ENCODE measurements at regions of chr10 and their contacts with region 1.

Region 1: GRCh38 chr10:11178606-11179515 is 161.2 kb downstream of the CELF2 start:
- DNase-seq: peak; percentile 49 to 93 (median 80)
- ATAC-seq: peak; percentile 90
- H3K4me3 ChIP-seq: peak overlapping the region; percentile 50
- H3K4me3 Mint-ChIP-seq: peak overlapping the region in 4 of 10 donors; percentile 66 to 83 (median 82)
- H3K27ac ChIP-seq: peak overlapping the region; percentile 95
- H3K27ac Mint-ChIP-seq: peak overlapping the region in 6 of 9 donors; percentile 92 to 98 (median 95)
- H3K4me1 ChIP-seq: peaks cover 90 to 96% of the 10 kb centered on the region in 2 donors
- H3K4me1 Mint-ChIP-seq: peaks cover 0 to 99% (median 30%) of the 10 kb centered on the region in 7 donors
- H3K27me3 ChIP-seq: no peaks in the 10 kb centered on the region
- H3K27me3 Mint-ChIP-seq: peaks cover 0 to 3% (median 0%) of the 10 kb centered on the region in 5 donors

Region 2: GRCh38 chr10:10903620-10904019 is 275.2 kb before region 1 on chr10:
- CTCF ChIA-PET with region 1: no interaction called
- POLR2A ChIA-PET with region 1: no interaction called
- intact Hi-C with region 1: no loop called
- DNase-seq: no peak
- ATAC-seq: no peak
- H3K4me3 ChIP-seq: no peak overlapping the region
- H3K4me3 Mint-ChIP-seq: no peak overlapping the region
- H3K27ac ChIP-seq: no peak overlapping the region
- H3K27ac Mint-ChIP-seq: no peak overlapping the region
- H3K4me1 ChIP-seq: no peaks in the 10 kb centered on the region
- H3K4me1 Mint-ChIP-seq: no peaks in the 10 kb centered on the region
- H3K27me3 ChIP-seq: no peaks in the 10 kb centered on the region
- H3K27me3 Mint-ChIP-seq: peaks cover 0 to 12% (median 9%) of the 10 kb centered on the region in 5 donors

Region 3: GRCh38 chr10:11113156-11113555 is 65.7 kb before region 1 on chr10:
- CTCF ChIA-PET with region 1: interaction called, 3 read pairs
- POLR2A ChIA-PET with region 1: interaction called, 4 read pairs
- intact Hi-C with region 1: loop called (anchors 1 kb)
- DNase-seq: peak in 7 of 9 donors; percentile 48 to 69 (median 65)
- ATAC-seq: peak; percentile 97
- H3K4me3 ChIP-seq: no peak overlapping the region
- H3K4me3 Mint-ChIP-seq: peak overlapping the region in 9 of 10 donors; percentile 12 to 85 (median 63)
- H3K27ac ChIP-seq: peak overlapping the region; percentile 9
- H3K27ac Mint-ChIP-seq: peak overlapping the region in 8 of 9 donors; percentile 0 to 92 (median 72)
- H3K4me1 ChIP-seq: peaks cover 0 to 9% of the 10 kb centered on the region in 2 donors
- H3K4me1 Mint-ChIP-seq: peaks cover 10 to 56% (median 38%) of the 10 kb centered on the region in 7 donors
- H3K27me3 ChIP-seq: no peaks in the 10 kb centered on the region
- H3K27me3 Mint-ChIP-seq: peaks cover 0 to 5% (median 0%) of the 10 kb centered on the region in 5 donors

Region 4: DNA sequence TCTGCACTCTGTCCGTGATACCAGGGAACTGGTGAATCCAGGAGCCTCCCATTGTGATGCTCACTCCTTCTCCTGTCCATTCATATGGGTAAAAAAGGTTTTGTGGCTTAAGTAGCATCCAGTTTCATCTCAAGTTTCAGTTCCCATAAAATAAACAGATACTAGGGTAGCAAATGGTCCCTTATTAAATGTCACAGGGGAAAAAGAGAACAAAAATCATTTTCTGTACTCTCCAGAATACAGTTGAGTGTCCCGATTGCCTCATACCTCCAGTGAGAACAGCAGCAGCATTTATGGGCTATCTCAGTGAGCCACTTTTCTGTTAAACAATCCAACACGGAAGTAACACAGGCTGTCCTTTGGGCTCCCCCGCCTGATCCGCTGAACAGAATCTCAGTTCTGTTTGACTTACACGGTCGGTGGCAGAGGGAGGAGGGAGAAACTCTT is 18.4 kb after region 1 on chr10:
- CTCF ChIA-PET with region 1: no interaction called
- POLR2A ChIA-PET with region 1: interaction called, 4 read pairs
- intact Hi-C with region 1: loop called in 1 of 2 experiments (anchors 2 kb)
- DNase-seq: no peak
- ATAC-seq: peak; percentile 69
- H3K4me3 ChIP-seq: no peak overlapping the region
- H3K4me3 Mint-ChIP-seq: peak overlapping the region in 9 of 10 donors; percentile 6 to 66 (median 36)
- H3K27ac ChIP-seq: peak overlapping the region; percentile 12
- H3K27ac Mint-ChIP-seq: peak overlapping the region in 8 of 9 donors; percentile 38 to 88 (median 86)
- H3K4me1 ChIP-seq: peaks cover 51 to 73% of the 10 kb centered on the region in 2 donors
- H3K4me1 Mint-ChIP-seq: peaks cover 79 to 97% (median 82%) of the 10 kb centered on the region in 7 donors
- H3K27me3 ChIP-seq: no peaks in the 10 kb centered on the region
- H3K27me3 Mint-ChIP-seq: no peaks in the 10 kb centered on the region

Region 5: GRCh38 chr10:11225935-11226334 is 47.1 kb after region 1 on chr10:
- CTCF ChIA-PET with region 1: interaction called, 3 read pairs
- POLR2A ChIA-PET with region 1: interaction called, 7 read pairs
- intact Hi-C with region 1: loop called (anchors 1 kb)
- DNase-seq: peak in 5 of 9 donors; percentile 34 to 61 (median 47)
- ATAC-seq: peak; percentile 85
- H3K4me3 ChIP-seq: peak overlapping the region; percentile 19
- H3K4me3 Mint-ChIP-seq: peak overlapping the region in 9 of 10 donors; percentile 47 to 76 (median 67)
- H3K27ac ChIP-seq: peak overlapping the region; percentile 59
- H3K27ac Mint-ChIP-seq: peak overlapping the region; percentile 84 to 96 (median 87)
- H3K4me1 ChIP-seq: peaks cover 69 to 80% of the 10 kb centered on the region in 2 donors
- H3K4me1 Mint-ChIP-seq: peaks cover 65 to 100% (median 95%) of the 10 kb centered on the region in 7 donors
- H3K27me3 ChIP-seq: no peaks in the 10 kb centered on the region
- H3K27me3 Mint-ChIP-seq: no peaks in the 10 kb centered on the region

Region 6: GRCh38 chr10:11270135-11270857 is 91.4 kb after region 1 on chr10:
- CTCF ChIA-PET with region 1: no interaction called
- POLR2A ChIA-PET with region 1: no interaction called
- intact Hi-C with region 1: loop called in 1 of 2 experiments (anchors 1 kb)
- DNase-seq: peak; percentile 24 to 68 (median 56)
- ATAC-seq: peak; percentile 90
- H3K4me3 ChIP-seq: no peak overlapping the region
- H3K4me3 Mint-ChIP-seq: peak overlapping the region in 2 of 10 donors; percentile 29 to 54
- H3K27ac ChIP-seq: no peak overlapping the region
- H3K27ac Mint-ChIP-seq: peak overlapping the region in 8 of 9 donors; percentile 24 to 83 (median 70)
- H3K4me1 ChIP-seq: peaks cover 0 to 4% of the 10 kb centered on the region in 2 donors
- H3K4me1 Mint-ChIP-seq: peaks cover 33 to 75% (median 66%) of the 10 kb centered on the region in 7 donors
- H3K27me3 ChIP-seq: no peaks in the 10 kb centered on the region
- H3K27me3 Mint-ChIP-seq: no peaks in the 10 kb centered on the region